Right ventricle myocardium inferior (tissue), 1 donor: ENCODE measurements at regions of chr2 and their contacts with region 1.

Region 1: GRCh38 chr2:159137511-159138241 is 148.8 kb downstream of the WDSUB1 start:
- DNase-seq: no peak
- ATAC-seq: peak; percentile 41

Region 2: DNA sequence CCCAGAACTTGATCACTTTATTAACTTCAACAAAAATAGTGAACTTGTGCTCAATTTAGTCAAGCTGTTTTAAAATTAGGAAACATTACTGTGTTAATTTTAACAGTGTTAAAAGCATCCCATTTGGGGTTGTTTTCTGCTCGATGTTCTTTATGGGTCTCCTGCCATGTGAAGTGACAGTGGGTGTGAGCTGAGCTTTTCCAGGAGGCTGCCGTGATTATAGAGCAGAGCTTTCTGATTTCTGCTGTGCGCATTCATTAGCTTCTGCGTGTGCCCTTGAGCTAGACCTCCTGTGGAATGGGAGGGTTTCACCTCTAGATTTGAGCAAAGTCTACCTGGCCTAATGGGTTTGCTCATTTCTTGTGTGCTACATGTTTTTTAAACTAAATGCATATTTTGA is 27.4 kb after region 1 on chr2:
- intact Hi-C with region 1: loop called (anchors 1 kb)
- DNase-seq: no peak
- ATAC-seq: peak; percentile 71

Region 3: DNA sequence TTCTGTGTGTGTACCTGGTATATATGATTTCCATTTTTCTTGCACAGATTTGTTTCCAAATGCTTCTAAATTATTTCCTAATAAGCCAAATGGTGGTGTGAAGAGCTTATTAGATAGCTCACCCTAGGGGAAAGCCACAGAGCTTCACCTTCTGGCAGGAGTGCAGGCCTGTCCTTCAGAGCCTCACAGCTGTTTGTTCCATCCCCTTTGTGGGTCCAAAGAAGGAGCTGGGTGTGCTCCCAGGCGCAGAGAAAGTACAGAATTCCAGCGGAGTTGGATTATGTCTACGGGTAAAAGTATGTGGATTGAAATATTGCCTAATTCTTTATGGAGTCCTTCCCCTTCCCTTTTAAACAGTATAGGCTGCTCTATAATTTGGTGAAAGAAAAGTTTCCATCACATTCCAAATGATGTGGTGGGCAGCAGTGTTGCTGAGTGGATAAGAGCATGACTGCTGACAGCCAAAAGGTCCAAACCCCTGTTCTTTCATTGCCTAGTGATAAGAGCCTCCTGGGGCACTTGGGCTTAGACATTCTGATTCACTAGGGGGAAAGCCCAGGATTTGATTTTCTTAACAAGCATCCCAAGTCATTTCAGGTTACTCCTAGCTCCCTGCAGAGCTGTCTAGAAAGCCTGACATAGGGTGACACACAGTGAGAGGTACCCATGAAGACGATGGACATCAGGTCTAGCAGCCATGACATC is 62.2 kb after region 1 on chr2:
- intact Hi-C with region 1: loop called (anchors 5 kb)
- DNase-seq: no peak
- ATAC-seq: no peak